Right ventricle myocardium superior (tissue), 1 donor: ENCODE measurements at regions of chr4 and their contacts with region 1.

Region 1: DNA sequence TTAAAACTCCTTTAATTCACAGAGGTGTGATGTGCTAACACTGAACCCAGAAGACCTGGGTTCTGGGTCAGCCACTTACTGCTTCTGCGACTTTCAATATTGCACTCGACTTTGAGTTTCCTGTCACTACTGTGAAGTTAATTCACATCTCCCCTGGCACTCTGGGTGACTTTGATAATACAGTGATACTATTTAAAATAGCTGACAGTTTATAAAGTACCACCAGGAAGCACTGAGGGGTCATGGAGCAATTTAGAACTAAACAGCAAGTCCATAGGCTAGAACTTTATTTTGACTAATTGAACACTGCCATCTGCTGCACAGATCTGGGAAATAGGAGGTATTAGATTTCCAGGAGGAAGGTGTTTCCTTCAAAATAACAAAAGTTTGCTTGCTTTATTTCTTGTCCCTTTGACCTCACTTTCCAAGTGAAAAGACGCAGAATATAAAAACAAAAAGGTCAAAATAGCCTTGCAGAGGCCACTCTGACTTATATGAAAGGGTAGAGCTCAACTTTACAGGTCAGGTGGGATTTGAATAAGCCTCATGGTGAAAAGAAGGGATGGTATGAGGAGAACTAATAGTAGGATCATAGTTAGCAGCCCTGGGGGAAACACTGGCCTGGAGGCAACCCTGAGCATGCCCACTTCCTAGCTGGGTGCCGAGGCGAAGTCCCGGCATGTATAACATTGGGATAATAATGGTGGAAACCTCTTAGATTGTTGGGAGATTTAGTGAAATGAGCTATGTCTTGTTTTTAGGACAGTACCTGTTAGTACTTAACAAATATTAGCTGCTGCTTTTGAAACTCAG is 53.4 kb downstream of the ZNF518B start:
- DNase-seq: no peak
- ATAC-seq: peak; percentile 75

Region 2: DNA sequence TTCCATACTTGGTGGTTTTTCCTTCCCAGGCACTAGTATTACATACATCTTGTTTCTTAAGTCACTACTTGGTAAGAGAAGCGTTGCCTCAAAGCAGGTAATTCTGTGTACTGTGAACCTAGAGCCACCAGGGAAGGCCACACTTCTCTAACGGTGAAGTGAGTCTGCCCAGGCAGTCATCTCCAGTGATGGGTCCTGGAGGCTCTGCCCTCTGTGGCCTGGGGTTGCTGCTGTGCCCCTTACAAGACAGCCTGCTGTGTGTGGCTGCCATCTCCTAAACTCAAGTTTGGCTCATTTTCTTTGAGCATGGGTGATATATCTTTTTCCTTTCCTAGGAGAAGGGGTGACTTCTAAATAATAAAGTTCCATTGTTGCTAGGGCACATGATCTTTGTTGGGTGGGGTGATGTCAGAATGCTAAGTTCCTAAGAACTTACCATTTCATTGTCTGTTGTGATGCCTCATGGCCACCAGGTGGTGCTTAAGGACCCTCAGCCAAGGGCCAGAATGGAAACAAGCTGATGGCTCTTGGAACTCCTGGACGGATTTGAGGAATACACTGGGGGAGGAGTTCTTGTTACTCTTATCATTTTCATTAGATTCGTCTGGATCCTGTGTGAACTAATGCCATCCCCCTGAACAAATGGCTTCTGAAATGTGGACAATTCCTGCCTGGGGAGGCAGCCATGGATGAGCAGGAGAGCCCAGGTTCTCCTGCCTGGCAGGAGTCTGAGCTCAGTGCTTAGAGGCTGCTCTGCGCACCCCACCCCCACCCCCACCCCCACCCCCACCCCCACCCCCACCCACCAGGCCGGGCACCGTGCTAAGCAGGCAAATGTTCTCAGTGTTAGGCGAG is 246.1 kb before region 1 on chr4:
- intact Hi-C with region 1: loop called (anchors 2 kb)
- DNase-seq: peak; percentile 45
- ATAC-seq: peak; percentile 67

Region 3: DNA sequence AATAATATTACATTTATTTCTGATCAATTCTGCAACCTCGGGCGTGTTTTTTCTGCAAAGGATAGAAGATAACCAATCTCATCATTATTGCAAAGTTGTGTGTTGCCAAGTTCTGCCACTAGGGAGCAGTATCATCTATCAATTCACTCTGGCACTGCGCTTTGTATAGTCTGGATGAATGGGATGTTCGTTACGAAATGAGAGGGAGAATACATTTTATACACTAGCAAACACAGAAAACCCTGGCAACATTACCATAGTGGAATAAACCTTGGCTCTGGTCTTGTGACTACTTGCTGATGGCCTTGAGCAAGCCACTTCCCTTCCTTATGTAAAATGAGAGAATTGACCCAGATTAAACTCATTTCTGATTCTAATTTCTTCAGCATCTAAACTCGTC is 150.9 kb after region 1 on chr4:
- intact Hi-C with region 1: loop called (anchors 10 kb)
- DNase-seq: no peak
- ATAC-seq: peak; percentile 81